ENCODE measurements at regions of chr22 and their contacts with region 1.

Region 1: GRCh38 chr22:22207845-22208564 is 36.6 kb upstream of the VPREB1 start:
- DNase-seq: peak; percentile 53 to 71 (median 66)
- H3K4me3 ChIP-seq: no peak overlapping the region
- H3K4me3 Mint-ChIP-seq: peak overlapping the region in 3 of 8 donors; percentile 48 to 78 (median 63)
- H3K27ac ChIP-seq: no peak overlapping the region
- H3K27ac Mint-ChIP-seq: peak overlapping the region in 4 of 7 donors; percentile 45 to 70 (median 68)
- H3K4me1 ChIP-seq: peaks cover 31% of the 10 kb centered on the region
- H3K4me1 Mint-ChIP-seq: peaks cover 16 to 38% (median 28%) of the 10 kb centered on the region in 4 donors
- H3K27me3 ChIP-seq: no peaks in the 10 kb centered on the region
- H3K27me3 Mint-ChIP-seq: peaks cover 0 to 1% of the 10 kb centered on the region in 2 donors

Region 2: DNA sequence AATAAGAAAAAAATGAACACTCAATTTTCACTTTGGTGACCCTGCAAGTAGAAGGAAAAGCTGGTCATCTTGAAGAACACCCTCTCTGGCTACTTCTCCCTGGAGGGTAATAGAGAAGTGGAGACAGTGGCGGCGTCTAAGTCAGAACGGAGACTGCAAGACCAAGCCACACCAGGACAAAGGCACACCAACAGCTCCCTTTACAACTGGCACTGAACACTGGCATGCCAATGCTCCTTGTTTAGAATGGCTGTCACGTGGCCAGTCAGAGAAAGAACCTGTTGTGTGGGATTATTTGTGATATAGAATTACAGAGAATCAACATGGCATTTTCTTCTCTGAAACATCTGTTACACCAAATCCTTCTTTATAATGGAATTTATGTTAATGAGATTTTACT is 411.1 kb before region 1 on chr22:
- CTCF ChIA-PET with region 1: no interaction called
- POLR2A ChIA-PET with region 1: no interaction called
- intact Hi-C with region 1: no loop called
- DNase-seq: no peak
- H3K4me3 ChIP-seq: no peak overlapping the region
- H3K4me3 Mint-ChIP-seq: no peak overlapping the region
- H3K27ac ChIP-seq: no peak overlapping the region
- H3K27ac Mint-ChIP-seq: peak overlapping the region in 3 of 7 donors; percentile 17 to 85 (median 66)
- H3K4me1 ChIP-seq: peaks cover 5% of the 10 kb centered on the region
- H3K4me1 Mint-ChIP-seq: peaks cover 4 to 9% (median 8%) of the 10 kb centered on the region in 4 donors
- H3K27me3 ChIP-seq: no peaks in the 10 kb centered on the region
- H3K27me3 Mint-ChIP-seq: no peaks in the 10 kb centered on the region

Region 3: DNA sequence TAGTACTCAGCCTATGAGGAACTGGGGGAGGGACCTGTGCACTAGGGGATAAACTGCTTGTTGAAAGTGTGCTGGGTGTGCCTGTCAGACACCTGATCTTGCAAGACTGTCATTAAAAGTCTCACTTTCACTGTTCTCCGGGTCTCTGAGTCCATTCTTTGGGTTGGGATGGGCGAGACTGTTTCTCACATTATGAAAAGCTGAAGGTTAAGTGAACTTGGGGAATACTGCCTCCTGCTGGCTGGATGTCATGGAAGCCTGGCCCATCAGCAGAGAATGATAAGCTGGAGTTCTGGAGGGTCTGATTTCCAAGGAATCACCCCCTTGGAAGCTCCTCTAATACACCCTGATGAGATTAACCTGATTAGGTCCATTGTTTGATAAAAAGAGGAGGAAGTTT is 27.6 kb after region 1 on chr22:
- CTCF ChIA-PET with region 1: interaction called, 57 read pairs
- POLR2A ChIA-PET with region 1: interaction called, 5 read pairs
- intact Hi-C with region 1: loop called (anchors 1 kb)
- DNase-seq: peak in 4 of 5 donors; percentile 18 to 39 (median 21)
- H3K4me3 ChIP-seq: no peak overlapping the region
- H3K4me3 Mint-ChIP-seq: no peak overlapping the region
- H3K27ac ChIP-seq: no peak overlapping the region
- H3K27ac Mint-ChIP-seq: peak overlapping the region in 1 of 7 donors; percentile 46
- H3K4me1 ChIP-seq: no peaks in the 10 kb centered on the region
- H3K4me1 Mint-ChIP-seq: no peaks in the 10 kb centered on the region
- H3K27me3 ChIP-seq: no peaks in the 10 kb centered on the region
- H3K27me3 Mint-ChIP-seq: peaks cover 0 to 3% of the 10 kb centered on the region in 2 donors

Region 4: GRCh38 chr22:22322792-22323191 is 114.8 kb after region 1 on chr22:
- CTCF ChIA-PET with region 1: interaction called, 3 read pairs
- POLR2A ChIA-PET with region 1: no interaction called
- intact Hi-C with region 1: loop called (anchors 1 kb)
- DNase-seq: no peak
- H3K4me3 ChIP-seq: no peak overlapping the region
- H3K4me3 Mint-ChIP-seq: no peak overlapping the region
- H3K27ac ChIP-seq: no peak overlapping the region
- H3K27ac Mint-ChIP-seq: no peak overlapping the region
- H3K4me1 ChIP-seq: no peaks in the 10 kb centered on the region
- H3K4me1 Mint-ChIP-seq: no peaks in the 10 kb centered on the region
- H3K27me3 ChIP-seq: no peaks in the 10 kb centered on the region
- H3K27me3 Mint-ChIP-seq: no peaks in the 10 kb centered on the region

Region 5: DNA sequence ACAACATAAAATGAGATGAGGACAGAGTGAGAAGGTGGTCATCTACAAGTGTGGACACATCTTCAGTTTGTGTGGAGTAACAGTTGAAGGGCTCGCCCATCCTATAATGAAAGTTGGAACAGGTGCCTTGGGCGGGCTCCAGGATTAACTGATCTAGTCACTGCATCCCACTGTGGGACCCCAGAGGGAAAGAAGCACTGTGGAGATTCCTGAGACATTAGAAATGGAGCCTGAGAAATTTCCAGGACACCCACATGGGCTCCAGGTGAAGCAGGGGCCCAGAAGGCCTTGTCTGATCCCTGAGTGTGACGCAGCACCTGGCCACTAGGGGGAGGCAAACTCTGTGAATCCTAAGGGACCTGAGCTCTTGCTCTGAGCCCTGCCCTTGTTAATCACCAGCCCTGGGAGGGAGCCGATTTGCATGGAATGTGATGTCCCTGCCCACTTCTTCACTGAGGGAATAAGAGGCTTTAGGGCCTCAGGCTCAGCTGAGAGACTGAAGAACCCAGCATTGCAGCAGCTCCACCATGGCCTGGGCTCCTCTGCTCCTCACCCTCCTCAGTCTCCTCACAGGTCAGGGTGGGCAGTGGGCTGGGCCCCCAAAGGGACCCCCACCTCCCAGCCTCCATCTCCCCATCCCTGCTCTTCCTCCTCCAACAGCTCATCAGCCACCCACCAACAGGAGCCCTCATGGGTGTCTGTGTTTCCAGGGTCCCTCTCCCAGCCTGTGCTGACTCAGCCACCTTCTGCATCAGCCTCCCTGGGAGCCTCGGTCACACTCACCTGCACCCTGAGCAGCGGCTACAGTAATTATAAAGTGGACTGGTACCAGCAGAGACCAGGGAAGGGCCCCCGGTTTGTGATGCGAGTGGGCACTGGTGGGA is 134.9 kb after region 1 on chr22:
- CTCF ChIA-PET with region 1: interaction called, 3 read pairs
- POLR2A ChIA-PET with region 1: no interaction called
- intact Hi-C with region 1: loop called (anchors 5 kb)
- DNase-seq: peak; percentile 32 to 53 (median 40)
- H3K4me3 ChIP-seq: no peak overlapping the region
- H3K4me3 Mint-ChIP-seq: no peak overlapping the region
- H3K27ac ChIP-seq: no peak overlapping the region
- H3K27ac Mint-ChIP-seq: no peak overlapping the region
- H3K4me1 ChIP-seq: no peaks in the 10 kb centered on the region
- H3K4me1 Mint-ChIP-seq: no peaks in the 10 kb centered on the region
- H3K27me3 ChIP-seq: no peaks in the 10 kb centered on the region
- H3K27me3 Mint-ChIP-seq: peaks cover 0 to 7% of the 10 kb centered on the region in 2 donors

Region 6: GRCh38 chr22:22431271-22432220 is 223.5 kb after region 1 on chr22:
- CTCF ChIA-PET with region 1: no interaction called
- POLR2A ChIA-PET with region 1: no interaction called
- intact Hi-C with region 1: loop called (anchors 5 kb)
- DNase-seq: peak; percentile 23 to 39 (median 35)
- H3K4me3 ChIP-seq: no peak overlapping the region
- H3K4me3 Mint-ChIP-seq: no peak overlapping the region
- H3K27ac ChIP-seq: no peak overlapping the region
- H3K27ac Mint-ChIP-seq: no peak overlapping the region
- H3K4me1 ChIP-seq: no peaks in the 10 kb centered on the region
- H3K4me1 Mint-ChIP-seq: no peaks in the 10 kb centered on the region
- H3K27me3 ChIP-seq: no peaks in the 10 kb centered on the region
- H3K27me3 Mint-ChIP-seq: peaks cover 0 to 12% of the 10 kb centered on the region in 2 donors